Ascending aorta (tissue), 2 donors: ENCODE measurements at regions of chr1 and their contacts with region 1.

Region 1: DNA sequence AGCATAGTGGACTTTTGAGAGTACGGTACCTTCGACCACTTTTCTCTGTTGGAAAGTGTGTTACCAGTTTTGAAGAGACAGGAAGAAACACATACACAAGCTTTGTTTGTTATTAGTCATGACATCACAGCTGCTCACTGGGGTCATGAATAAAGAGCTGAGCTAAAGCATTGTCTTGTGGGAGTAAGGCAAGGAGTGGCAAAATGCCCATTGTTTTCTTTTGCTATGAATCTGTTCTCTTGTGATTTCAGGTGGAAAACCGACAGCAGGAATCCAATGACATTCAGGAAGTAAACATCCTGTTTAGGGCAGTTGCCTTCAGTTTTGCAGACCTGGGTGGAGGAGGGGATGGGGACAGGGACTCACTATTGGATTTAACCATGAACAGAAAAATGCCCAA is 66.2 kb downstream of the RGL1 start:
- DNase-seq: no peak
- H3K4me3 ChIP-seq: no peak overlapping the region
- H3K27ac ChIP-seq: peak overlapping the region; percentile 57
- H3K4me1 ChIP-seq: peaks cover 10 to 19% of the 10 kb centered on the region in 2 donors
- H3K27me3 ChIP-seq: no peaks in the 10 kb centered on the region
- CTCF ChIP-seq: no peak

Region 2: GRCh38 chr1:183580281-183580682 is 290.9 kb before region 1 on chr1:
- intact Hi-C with region 1: no loop called
- DNase-seq: peak; percentile 27 to 65
- H3K4me3 ChIP-seq: no peak overlapping the region
- H3K27ac ChIP-seq: peak overlapping the region in 1 of 2 donors; percentile 14
- H3K4me1 ChIP-seq: peaks cover 18 to 29% of the 10 kb centered on the region in 2 donors
- H3K27me3 ChIP-seq: no peaks in the 10 kb centered on the region
- CTCF ChIP-seq: no peak

Region 3: GRCh38 chr1:183812686-183813569 is 58.2 kb before region 1 on chr1:
- intact Hi-C with region 1: loop called (anchors 10 kb)
- DNase-seq: no peak
- H3K4me3 ChIP-seq: no peak overlapping the region
- H3K27ac ChIP-seq: peak overlapping the region in 1 of 2 donors; percentile 30
- H3K4me1 ChIP-seq: peaks cover 0 to 21% of the 10 kb centered on the region in 2 donors
- H3K27me3 ChIP-seq: no peaks in the 10 kb centered on the region
- CTCF ChIP-seq: no peak